ENCODE measurements at regions of chr18 and their contacts with region 1.

Region 1: DNA sequence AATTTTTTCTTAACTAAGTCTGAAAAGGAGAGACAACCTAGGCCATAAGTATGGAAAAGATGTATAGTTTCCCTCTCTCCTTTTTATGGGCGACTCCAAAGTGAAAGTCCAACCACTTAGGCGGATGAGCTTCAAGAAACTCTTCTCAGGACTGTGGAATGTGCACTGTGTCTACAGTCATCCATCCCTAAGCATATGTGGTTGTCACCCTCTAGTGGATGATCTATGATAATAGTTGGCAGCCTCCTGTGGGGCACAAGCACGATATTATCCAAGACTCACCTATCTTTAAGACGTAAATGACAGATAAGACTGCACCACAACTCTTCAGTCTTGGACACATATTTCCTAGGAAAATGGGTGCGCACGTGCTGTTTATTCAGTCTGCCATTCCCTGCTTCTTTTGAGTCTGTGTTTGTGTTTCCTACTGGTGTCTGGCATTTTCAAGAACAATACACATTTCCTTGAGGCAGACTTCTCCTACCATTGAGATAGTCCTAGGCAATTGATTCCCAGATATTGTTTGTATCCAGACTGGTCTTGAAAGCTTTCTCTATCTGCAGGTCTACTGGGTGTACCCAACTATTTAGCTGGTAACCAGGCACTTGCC is 145.5 kb upstream of the CTAGE1 start:
- DNase-seq: peak in 1 of 2 donors; percentile 40
- H3K4me3 ChIP-seq: peak overlapping the region; percentile 24 to 34
- H3K27ac ChIP-seq: peak overlapping the region; percentile 92 to 93
- H3K4me1 ChIP-seq: peaks cover 0 to 18% (median 6%) of the 10 kb centered on the region in 4 donors
- H3K27me3 ChIP-seq: no peaks in the 10 kb centered on the region
- CTCF ChIP-seq: peak; percentile 73 to 86

Region 2: DNA sequence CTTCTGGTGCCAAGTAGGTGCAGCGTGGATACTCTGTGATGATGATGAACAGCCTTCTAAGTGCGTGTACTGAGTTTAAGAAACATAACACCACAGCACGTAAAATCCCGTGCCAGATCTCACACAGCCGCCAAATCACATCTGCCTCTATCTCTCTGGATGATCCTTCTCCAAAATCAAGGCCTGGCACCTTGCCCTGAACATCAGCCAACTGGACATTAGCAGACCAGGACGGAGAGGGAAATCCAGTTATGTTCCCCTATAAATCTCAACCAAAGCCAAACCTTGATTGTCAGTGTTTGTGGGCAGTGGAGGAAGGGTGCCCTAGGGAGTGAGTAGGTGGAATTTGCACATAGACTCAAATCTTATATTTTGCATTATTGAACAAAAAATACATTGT is 658.3 kb before region 1 on chr18:
- intact Hi-C with region 1: loop called (anchors 10 kb)
- DNase-seq: no peak
- H3K4me3 ChIP-seq: no peak overlapping the region
- H3K27ac ChIP-seq: no peak overlapping the region
- H3K4me1 ChIP-seq: no peaks in the 10 kb centered on the region
- H3K27me3 ChIP-seq: no peaks in the 10 kb centered on the region
- CTCF ChIP-seq: no peak

Region 3: DNA sequence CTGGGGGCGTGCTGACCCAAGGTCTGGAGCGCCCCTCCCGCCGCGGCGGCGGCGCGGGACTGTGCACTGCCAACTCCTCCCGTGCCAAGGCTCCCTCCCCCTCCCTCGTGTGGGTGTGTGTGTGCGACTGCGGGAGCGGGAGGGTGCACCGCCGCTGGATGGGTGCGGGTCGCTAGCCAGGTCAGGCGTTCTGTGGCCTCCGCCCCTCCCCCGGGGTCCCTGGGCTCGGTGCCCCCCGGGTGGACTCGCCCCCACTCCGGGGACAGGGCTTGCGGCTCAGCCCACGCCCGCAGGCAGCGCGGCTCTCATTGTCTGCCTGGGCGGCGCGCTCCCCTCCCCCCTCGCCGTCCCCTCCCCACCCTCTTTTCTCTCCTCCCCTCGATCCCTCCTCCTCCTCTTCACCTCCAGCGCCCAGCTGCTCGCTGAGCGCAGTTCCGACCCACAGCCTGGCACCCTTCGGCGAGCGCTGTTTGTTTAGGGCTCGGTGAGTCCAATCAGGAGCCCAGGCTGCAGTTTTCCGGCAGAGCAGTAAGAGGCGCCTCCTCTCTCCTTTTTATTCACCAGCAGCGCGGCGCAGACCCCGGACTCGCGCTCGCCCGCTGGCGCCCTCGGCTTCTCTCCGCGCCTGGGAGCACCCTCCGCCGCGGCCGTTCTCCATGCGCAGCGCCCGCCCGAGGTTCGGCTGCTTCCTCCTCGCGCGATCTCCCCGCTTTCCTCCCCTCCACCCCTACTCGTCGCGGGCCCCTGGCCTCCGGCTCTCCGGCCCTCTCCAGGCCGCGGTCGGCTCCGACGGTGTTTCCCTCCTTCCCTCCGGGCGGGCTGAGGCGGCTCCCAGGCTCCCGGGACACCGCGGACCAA is 394.0 kb before region 1 on chr18 and contains the start of gene GATA6:
- intact Hi-C with region 1: loop called (anchors 2 kb)
- DNase-seq: peak; percentile 96 to 98
- H3K4me3 ChIP-seq: peak within 1 kb of the TSS; percentile 93 to 98
- H3K27ac ChIP-seq: peak within 1 kb of the TSS; percentile 97 to 100
- H3K4me1 ChIP-seq: peaks cover 0 to 46% (median 17%) of the 10 kb centered on the region in 4 donors
- H3K27me3 ChIP-seq: peaks cover 0 to 14% of the 10 kb centered on the region in 2 donors
- CTCF ChIP-seq: peak in 1 of 2 experiments; percentile 25

Region 4: GRCh38 chr18:22348521-22349316 is 214.5 kb before region 1 on chr18:
- intact Hi-C with region 1: loop called (anchors 5 kb)
- DNase-seq: peak; percentile 70 to 84
- H3K4me3 ChIP-seq: peak overlapping the region; percentile 58 to 77
- H3K27ac ChIP-seq: peak overlapping the region; percentile 85 to 92
- H3K4me1 ChIP-seq: peaks cover 0 to 41% (median 18%) of the 10 kb centered on the region in 4 donors
- H3K27me3 ChIP-seq: no peaks in the 10 kb centered on the region
- CTCF ChIP-seq: no peak

Region 5: GRCh38 chr18:22471546-22472131 is 91.6 kb before region 1 on chr18:
- intact Hi-C with region 1: loop called (anchors 5 kb)
- DNase-seq: peak; percentile 74 to 84
- H3K4me3 ChIP-seq: no peak overlapping the region
- H3K27ac ChIP-seq: peak overlapping the region; percentile 78 to 84
- H3K4me1 ChIP-seq: peaks cover 0 to 64% (median 47%) of the 10 kb centered on the region in 4 donors
- H3K27me3 ChIP-seq: no peaks in the 10 kb centered on the region
- CTCF ChIP-seq: no peak

Region 6: GRCh38 chr18:22521026-22521707 is 42.0 kb before region 1 on chr18:
- intact Hi-C with region 1: no loop called
- DNase-seq: no peak
- H3K4me3 ChIP-seq: no peak overlapping the region
- H3K27ac ChIP-seq: no peak overlapping the region
- H3K4me1 ChIP-seq: peaks cover 0 to 8% (median 0%) of the 10 kb centered on the region in 4 donors
- H3K27me3 ChIP-seq: no peaks in the 10 kb centered on the region
- CTCF ChIP-seq: no peak

Region 7: DNA sequence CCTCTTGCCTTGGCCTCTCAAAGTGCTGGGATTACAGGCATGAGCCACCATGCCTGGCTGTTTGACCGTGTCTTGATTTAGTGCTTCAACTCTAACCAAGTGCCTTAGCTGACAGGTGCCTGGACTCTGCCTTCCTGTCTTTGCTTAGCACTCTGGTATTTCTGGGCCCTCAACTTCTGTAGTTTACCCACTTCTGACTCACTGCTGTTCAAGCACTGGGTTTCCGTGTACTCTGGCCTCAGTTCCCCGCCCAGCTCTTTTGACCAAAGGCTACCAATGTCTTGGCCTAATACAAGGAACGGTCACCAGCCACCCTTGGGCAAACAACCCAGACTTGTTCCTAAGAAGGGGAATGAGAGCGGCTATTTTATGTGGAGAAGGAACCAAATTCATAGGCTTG is 536.4 kb after region 1 on chr18:
- intact Hi-C with region 1: no loop called
- DNase-seq: no peak
- H3K4me3 ChIP-seq: no peak overlapping the region
- H3K27ac ChIP-seq: no peak overlapping the region
- H3K4me1 ChIP-seq: no peaks in the 10 kb centered on the region
- H3K27me3 ChIP-seq: peaks cover 0 to 17% of the 10 kb centered on the region in 2 donors
- CTCF ChIP-seq: no peak